Heart left ventricle (tissue), 16 donors: ENCODE measurements at regions of chr11 and their contacts with region 1.

Region 1: GRCh38 chr11:69443138-69443967 is 38.1 kb upstream of the LINC01488 start:
- DNase-seq: peak; percentile 94 to 96 (median 95)
- ATAC-seq: peak; percentile 87 to 96 (median 93)
- H3K4me3 ChIP-seq: peak overlapping the region in 10 of 12 donors; percentile 29 to 64 (median 50)
- H3K27ac ChIP-seq: peak overlapping the region; percentile 67 to 95 (median 90)
- H3K4me1 ChIP-seq: peaks cover 3 to 47% (median 33%) of the 10 kb centered on the region in 12 donors
- H3K27me3 ChIP-seq: no peaks in the 10 kb centered on the region
- CTCF ChIP-seq: no peak
- POLR2A ChIP-seq: peak in 1 of 2 donors; percentile 70

Region 2: GRCh38 chr11:69101115-69101791 is 342.1 kb before region 1 on chr11:
- intact Hi-C with region 1: loop called in 1 of 10 experiments (anchors 5 kb)
- DNase-seq: peak; percentile 64 to 85 (median 81)
- ATAC-seq: peak; percentile 72 to 86 (median 83)
- H3K4me3 ChIP-seq: no peak overlapping the region
- H3K27ac ChIP-seq: no peak overlapping the region
- H3K4me1 ChIP-seq: peaks cover 0 to 20% (median 9%) of the 10 kb centered on the region in 12 donors
- H3K27me3 ChIP-seq: no peaks in the 10 kb centered on the region
- CTCF ChIP-seq: peak; percentile 96 to 100 (median 100)
- POLR2A ChIP-seq: no peak

Region 3: DNA sequence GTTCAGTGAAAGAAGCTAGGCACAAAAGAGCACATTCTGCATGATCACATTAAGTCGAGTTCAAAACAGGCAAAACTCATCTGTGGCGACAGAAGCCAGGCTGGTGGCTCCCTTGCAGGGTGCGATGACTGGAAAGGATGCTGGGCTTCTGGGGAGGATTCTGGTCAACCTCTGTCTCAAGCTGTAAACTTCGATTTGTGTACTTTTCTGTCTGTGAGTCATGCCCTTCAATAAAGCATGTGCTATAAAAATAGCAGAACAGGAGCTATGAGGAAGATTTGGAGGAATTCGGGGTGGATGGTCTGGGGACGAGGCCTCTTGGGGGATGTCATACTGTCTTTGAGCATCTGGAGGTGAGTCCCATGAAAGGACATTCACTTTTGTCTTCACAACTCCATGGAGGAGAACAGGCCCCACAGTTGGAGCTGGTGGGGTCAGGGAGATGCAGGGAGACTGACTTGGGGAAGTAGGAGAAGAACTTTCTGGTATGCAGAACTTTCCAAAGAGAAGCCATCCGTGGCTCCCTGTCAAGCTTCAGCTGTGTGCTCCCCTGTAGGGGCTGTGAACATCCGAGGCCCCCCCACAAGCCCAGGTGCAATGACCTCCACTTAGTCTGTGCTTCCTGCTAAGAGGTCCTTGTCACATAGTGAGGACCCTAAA is 39.7 kb before region 1 on chr11:
- intact Hi-C with region 1: no loop called
- DNase-seq: no peak
- ATAC-seq: no peak
- H3K4me3 ChIP-seq: no peak overlapping the region
- H3K27ac ChIP-seq: no peak overlapping the region
- H3K4me1 ChIP-seq: peaks cover 0 to 7% (median 0%) of the 10 kb centered on the region in 12 donors
- H3K27me3 ChIP-seq: no peaks in the 10 kb centered on the region
- CTCF ChIP-seq: no peak
- POLR2A ChIP-seq: no peak

Region 4: GRCh38 chr11:69540118-69540502 is 96.8 kb after region 1 on chr11:
- intact Hi-C with region 1: loop called in 2 of 10 experiments (anchors 5 to 10 kb)
- DNase-seq: peak; percentile 62 to 74 (median 66)
- ATAC-seq: peak in 3 of 4 donors; percentile 37 to 63 (median 61)
- H3K4me3 ChIP-seq: peak overlapping the region in 8 of 12 donors; percentile 3 to 27 (median 16)
- H3K27ac ChIP-seq: peak overlapping the region in 11 of 12 donors; percentile 62 to 85 (median 77)
- H3K4me1 ChIP-seq: peaks cover 0 to 39% (median 30%) of the 10 kb centered on the region in 12 donors
- H3K27me3 ChIP-seq: no peaks in the 10 kb centered on the region
- CTCF ChIP-seq: peak in 2 of 12 donors; percentile 7 to 11
- POLR2A ChIP-seq: no peak